Tibial artery (tissue), 4 donors: ENCODE measurements at regions of chr1 and their contacts with region 1.

Region 1: GRCh38 chr1:109617291-109617863 is 2.0 kb downstream of the GNAT2 start:
- DNase-seq: peak in 1 of 2 donors; percentile 21
- H3K4me3 ChIP-seq: no peak overlapping the region
- H3K27ac ChIP-seq: no peak overlapping the region
- H3K4me1 ChIP-seq: peaks cover 0 to 31% (median 20%) of the 10 kb centered on the region in 4 donors
- H3K27me3 ChIP-seq: no peaks in the 10 kb centered on the region
- CTCF ChIP-seq: no peak

Region 2: GRCh38 chr1:109548321-109549267 is 68.8 kb before region 1 on chr1 and contains the start of gene GNAI3:
- intact Hi-C with region 1: loop called (anchors 2 kb)
- DNase-seq: peak; percentile 97 to 98
- H3K4me3 ChIP-seq: peak within 1 kb of the TSS; percentile 91 to 96
- H3K27ac ChIP-seq: peak within 1 kb of the TSS; percentile 94 to 96
- H3K4me1 ChIP-seq: peaks cover 0 to 53% (median 23%) of the 10 kb centered on the region in 4 donors
- H3K27me3 ChIP-seq: no peaks in the 10 kb centered on the region
- CTCF ChIP-seq: no peak

Region 3: GRCh38 chr1:110686188-110686587 is 1068.8 kb after region 1 on chr1:
- intact Hi-C with region 1: no loop called
- DNase-seq: no peak
- H3K4me3 ChIP-seq: no peak overlapping the region
- H3K27ac ChIP-seq: no peak overlapping the region
- H3K4me1 ChIP-seq: no peaks in the 10 kb centered on the region
- H3K27me3 ChIP-seq: peaks cover 0 to 9% of the 10 kb centered on the region in 2 donors
- CTCF ChIP-seq: no peak